Activated CD4-positive, alpha-beta memory T cell treated with anti-CD3 and anti-CD28 coated beads, Interleukin-2, amount 10 ng/mL, durations not matched to agents 7 days and 5 days (primary cell): ENCODE measurements at regions of chr3 and their contacts with region 1.

Region 1: GRCh38 chr3:17742108-17742879 is at the start of gene TBC1D5:
- DNase-seq: peak; percentile 95
- H3K4me3 Mint-ChIP-seq: peak within 1 kb of the TSS; percentile 93
- H3K27ac Mint-ChIP-seq: peak within 1 kb of the TSS; percentile 95
- H3K4me1 Mint-ChIP-seq: peaks cover 49% of the 10 kb centered on the region
- H3K27me3 Mint-ChIP-seq: no peaks in the 10 kb centered on the region
- total RNA-seq, gene TBC1D5: 49.9 to 50.8 TPM

Region 2: GRCh38 chr3:16427103-16427965 is 1315.0 kb before region 1 on chr3:
- CTCF ChIA-PET with region 1: no interaction called
- POLR2A ChIA-PET with region 1: no interaction called
- DNase-seq: no peak
- H3K4me3 Mint-ChIP-seq: no peak overlapping the region
- H3K27ac Mint-ChIP-seq: no peak overlapping the region
- H3K4me1 Mint-ChIP-seq: no peaks in the 10 kb centered on the region
- H3K27me3 Mint-ChIP-seq: no peaks in the 10 kb centered on the region

Region 3: DNA sequence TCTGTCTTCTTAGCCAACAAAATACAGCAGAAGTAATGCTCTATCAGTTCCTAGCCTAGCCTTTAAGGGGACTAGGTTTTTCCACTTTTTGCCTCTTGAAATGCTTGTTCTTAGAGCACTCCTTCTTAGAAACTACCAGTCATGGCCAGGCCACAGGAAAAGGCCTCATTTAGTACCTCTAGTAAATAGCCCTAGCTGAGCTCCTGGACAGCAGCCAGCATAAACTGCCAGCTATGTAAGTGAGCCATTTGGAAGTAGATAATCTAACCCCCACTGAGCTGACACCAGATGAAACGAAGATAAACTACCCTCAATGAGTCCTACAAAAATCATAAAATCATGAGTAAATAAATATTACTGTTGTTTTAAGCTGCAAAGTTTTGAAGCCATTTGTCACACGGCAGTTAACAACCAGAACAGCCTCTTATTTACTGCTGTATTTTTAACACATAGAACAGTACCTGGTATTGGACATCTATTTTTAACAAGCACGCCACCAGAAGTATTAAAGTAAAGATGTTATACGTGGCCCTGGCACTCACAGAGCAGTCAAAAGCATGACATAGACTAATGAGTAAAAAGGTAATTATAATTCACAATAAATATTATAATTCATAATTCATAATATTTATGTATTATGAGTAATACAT is 11.9 kb before region 1 on chr3:
- CTCF ChIA-PET with region 1: interaction called, 11 read pairs
- POLR2A ChIA-PET with region 1: interaction called, 11 read pairs
- DNase-seq: no peak
- H3K4me3 Mint-ChIP-seq: no peak overlapping the region
- H3K27ac Mint-ChIP-seq: no peak overlapping the region
- H3K4me1 Mint-ChIP-seq: peaks cover 21% of the 10 kb centered on the region
- H3K27me3 Mint-ChIP-seq: no peaks in the 10 kb centered on the region

Region 4: GRCh38 chr3:17775073-17775472 is 32.8 kb after region 1 on chr3:
- CTCF ChIA-PET with region 1: interaction called, 4 read pairs
- POLR2A ChIA-PET with region 1: interaction called, 12 read pairs
- DNase-seq: peak; percentile 38
- H3K4me3 Mint-ChIP-seq: peak overlapping the region; percentile 65
- H3K27ac Mint-ChIP-seq: peak overlapping the region; percentile 70
- H3K4me1 Mint-ChIP-seq: peaks cover 29% of the 10 kb centered on the region
- H3K27me3 Mint-ChIP-seq: peaks cover 8% of the 10 kb centered on the region